ENCODE measurements at regions of chr14 and their contacts with region 1.

Region 1: DNA sequence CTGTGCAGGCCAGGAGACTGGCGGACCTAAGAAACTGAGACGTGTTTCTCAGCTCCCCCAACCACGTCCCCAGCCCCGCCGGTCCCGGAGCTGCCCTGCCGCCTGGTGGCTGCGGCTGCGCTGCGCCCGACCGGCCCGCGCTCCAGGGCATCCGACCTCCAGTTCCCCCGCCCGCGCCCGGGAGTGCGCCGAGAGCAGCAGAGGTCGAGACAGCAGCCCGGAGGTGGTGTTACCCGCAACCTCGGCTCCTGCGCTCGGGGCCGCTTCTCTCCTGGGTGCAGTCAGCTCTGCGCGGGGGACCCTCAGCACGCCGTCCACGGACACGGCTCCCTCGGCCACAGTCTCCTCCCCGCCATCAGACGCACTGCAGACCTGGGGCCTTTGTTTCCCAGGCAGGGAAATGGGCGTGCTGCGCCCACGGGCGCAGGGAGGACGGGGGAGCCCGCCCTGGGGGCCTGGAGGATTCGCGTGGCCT is 21.6 kb upstream of the GPR132 start:
- DNase-seq: peak; percentile 69
- H3K4me3 Mint-ChIP-seq: peak overlapping the region; percentile 77
- H3K27ac Mint-ChIP-seq: no peak overlapping the region
- H3K4me1 Mint-ChIP-seq: peaks cover 27% of the 10 kb centered on the region
- H3K27me3 Mint-ChIP-seq: peaks cover 26% of the 10 kb centered on the region
- CTCF ChIP-seq: peak; percentile 69

Region 2: DNA sequence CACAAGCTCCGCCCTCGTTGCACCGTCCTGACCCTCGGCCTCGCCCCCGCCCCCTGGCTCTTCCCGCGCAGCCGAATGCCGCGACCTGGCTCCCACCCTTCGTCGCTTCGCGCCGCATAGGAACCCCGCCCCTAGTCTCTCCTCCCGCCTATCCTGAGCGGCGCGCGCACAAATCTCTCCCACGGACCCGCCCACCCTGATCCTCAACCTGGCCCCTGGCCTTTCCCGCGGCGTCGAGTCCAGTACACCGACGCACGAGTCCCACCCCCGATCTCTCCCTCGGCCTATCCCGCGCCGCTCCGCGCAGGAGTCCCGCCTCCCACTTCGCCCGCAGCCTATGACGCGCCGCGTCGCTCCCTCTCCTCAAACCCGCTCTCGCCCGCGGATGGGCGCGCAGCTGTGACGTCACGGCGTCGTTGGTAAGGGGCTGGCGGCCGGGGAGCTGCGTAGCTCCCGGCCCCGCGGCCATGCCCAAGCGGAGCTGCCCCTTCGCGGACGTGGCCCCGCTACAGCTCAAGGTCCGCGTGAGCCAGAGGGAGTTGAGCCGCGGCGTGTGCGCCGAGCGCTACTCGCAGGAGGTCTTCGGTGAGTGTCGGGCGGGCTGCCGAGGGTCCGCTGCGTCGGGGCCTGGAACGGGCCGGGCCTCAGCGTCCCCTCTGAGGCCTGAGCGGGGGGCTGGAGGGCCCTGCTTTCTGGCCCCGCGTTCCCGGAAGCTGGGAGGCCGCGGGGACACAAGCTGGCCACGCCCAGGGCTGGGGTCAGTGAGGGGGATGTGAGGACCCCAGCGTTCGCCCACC is 333.9 kb before region 1 on chr14 and contains the start of gene SIVA1:
- CTCF ChIA-PET with region 1: no interaction called
- POLR2A ChIA-PET with region 1: no interaction called
- intact Hi-C with region 1: no loop called
- DNase-seq: peak; percentile 99
- H3K4me3 Mint-ChIP-seq: peak within 1 kb of the TSS; percentile 92
- H3K27ac Mint-ChIP-seq: peak within 1 kb of the TSS; percentile 92
- H3K4me1 Mint-ChIP-seq: peaks cover 28% of the 10 kb centered on the region
- H3K27me3 Mint-ChIP-seq: no peaks in the 10 kb centered on the region
- CTCF ChIP-seq: no peak
- total RNA-seq, gene SIVA1: 63.3 and 72.7 TPM in 2 replicates

Region 3: DNA sequence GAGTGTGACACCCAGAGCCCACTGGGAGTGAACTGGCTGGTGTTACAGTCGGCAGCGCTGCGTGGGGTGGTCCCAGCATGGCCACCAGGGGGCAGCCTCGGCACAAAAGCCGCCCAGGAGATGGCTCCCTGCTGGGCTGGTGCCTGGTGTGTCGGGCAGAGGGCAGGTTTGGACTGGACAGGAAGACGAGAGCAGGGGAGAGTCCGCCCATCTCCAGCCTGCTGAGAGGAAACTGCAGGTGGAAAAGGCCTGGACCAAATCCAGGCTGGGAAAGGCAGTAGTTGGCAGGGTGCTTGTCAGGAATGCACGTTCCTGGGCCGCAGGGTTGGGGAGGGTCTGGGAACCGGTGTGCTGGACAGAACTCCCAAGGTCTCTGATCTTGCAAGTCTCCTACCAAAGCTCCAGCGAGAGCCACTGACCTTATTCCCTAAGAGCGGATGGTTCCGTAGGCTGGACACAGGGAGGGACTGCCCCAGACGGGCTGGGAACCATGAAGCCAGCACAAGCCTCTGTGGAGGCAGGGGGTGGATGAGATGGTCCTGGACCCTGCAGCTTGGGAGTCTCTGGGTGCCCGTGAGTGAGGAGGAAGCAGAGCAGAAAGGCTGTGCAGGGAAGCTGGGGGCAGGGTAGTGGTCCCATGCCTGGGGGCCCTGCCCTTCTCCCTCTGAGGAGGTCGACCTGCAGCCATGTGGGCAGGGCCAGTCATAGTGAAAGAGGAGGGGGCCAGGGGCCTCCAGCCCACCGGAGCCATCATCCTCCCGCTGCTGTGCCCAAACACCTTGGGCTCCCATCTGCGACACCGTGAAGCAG is 110.5 kb before region 1 on chr14:
- CTCF ChIA-PET with region 1: interaction called, 8 read pairs
- POLR2A ChIA-PET with region 1: interaction called, 45 read pairs
- intact Hi-C with region 1: loop called (anchors 2 kb)
- DNase-seq: peak; percentile 93
- H3K4me3 Mint-ChIP-seq: peak overlapping the region; percentile 97
- H3K27ac Mint-ChIP-seq: no peak overlapping the region
- H3K4me1 Mint-ChIP-seq: peaks cover 41% of the 10 kb centered on the region
- H3K27me3 Mint-ChIP-seq: no peaks in the 10 kb centered on the region
- CTCF ChIP-seq: peak; percentile 98

Region 4: DNA sequence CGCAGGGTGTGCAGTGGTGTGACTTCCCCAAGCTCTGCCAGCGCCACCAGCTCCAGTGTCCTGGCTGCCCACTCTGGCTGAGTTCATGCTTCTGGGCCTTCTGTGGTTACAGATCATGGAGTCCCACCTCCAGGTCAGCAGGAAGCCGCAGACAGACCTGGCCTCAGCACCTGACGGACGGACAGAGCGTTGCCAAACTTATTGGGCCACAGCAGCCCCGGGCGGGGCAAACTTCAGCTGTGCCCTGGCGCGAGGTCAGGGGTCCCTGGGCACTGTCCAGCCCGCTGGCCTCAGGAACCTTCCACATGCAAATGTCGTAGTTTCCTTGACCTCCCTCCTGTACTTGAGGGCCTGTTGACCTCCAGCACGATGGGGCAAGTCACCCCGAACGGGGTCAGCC is 32.9 kb before region 1 on chr14:
- CTCF ChIA-PET with region 1: no interaction called
- POLR2A ChIA-PET with region 1: interaction called, 10 read pairs
- intact Hi-C with region 1: no loop called
- DNase-seq: no peak
- H3K4me3 Mint-ChIP-seq: no peak overlapping the region
- H3K27ac Mint-ChIP-seq: no peak overlapping the region
- H3K4me1 Mint-ChIP-seq: no peaks in the 10 kb centered on the region
- H3K27me3 Mint-ChIP-seq: peaks cover 19% of the 10 kb centered on the region
- CTCF ChIP-seq: no peak

Region 5: GRCh38 chr14:105097794-105098127 is 10.9 kb after region 1 on chr14:
- CTCF ChIA-PET with region 1: interaction called, 12 read pairs
- POLR2A ChIA-PET with region 1: interaction called, 18 read pairs
- intact Hi-C with region 1: no loop called
- DNase-seq: no peak
- H3K4me3 Mint-ChIP-seq: no peak overlapping the region
- H3K27ac Mint-ChIP-seq: no peak overlapping the region
- H3K4me1 Mint-ChIP-seq: peaks cover 12% of the 10 kb centered on the region
- H3K27me3 Mint-ChIP-seq: peaks cover 9% of the 10 kb centered on the region
- CTCF ChIP-seq: no peak

Region 6: GRCh38 chr14:105180592-105181548 is 94.0 kb after region 1 on chr14 and contains the start of gene NUDT14:
- CTCF ChIA-PET with region 1: interaction called, 5 read pairs
- POLR2A ChIA-PET with region 1: no interaction called
- intact Hi-C with region 1: loop called (anchors 5 kb)
- DNase-seq: peak; percentile 72
- H3K4me3 Mint-ChIP-seq: peak within 1 kb of the TSS; percentile 69
- H3K27ac Mint-ChIP-seq: no peak within 1 kb of the TSS
- H3K4me1 Mint-ChIP-seq: no peaks in the 10 kb centered on the region
- H3K27me3 Mint-ChIP-seq: peaks cover 22% of the 10 kb centered on the region
- CTCF ChIP-seq: no peak
- total RNA-seq, gene NUDT14: 26.1 and 27.4 TPM in 2 replicates

Region 7: DNA sequence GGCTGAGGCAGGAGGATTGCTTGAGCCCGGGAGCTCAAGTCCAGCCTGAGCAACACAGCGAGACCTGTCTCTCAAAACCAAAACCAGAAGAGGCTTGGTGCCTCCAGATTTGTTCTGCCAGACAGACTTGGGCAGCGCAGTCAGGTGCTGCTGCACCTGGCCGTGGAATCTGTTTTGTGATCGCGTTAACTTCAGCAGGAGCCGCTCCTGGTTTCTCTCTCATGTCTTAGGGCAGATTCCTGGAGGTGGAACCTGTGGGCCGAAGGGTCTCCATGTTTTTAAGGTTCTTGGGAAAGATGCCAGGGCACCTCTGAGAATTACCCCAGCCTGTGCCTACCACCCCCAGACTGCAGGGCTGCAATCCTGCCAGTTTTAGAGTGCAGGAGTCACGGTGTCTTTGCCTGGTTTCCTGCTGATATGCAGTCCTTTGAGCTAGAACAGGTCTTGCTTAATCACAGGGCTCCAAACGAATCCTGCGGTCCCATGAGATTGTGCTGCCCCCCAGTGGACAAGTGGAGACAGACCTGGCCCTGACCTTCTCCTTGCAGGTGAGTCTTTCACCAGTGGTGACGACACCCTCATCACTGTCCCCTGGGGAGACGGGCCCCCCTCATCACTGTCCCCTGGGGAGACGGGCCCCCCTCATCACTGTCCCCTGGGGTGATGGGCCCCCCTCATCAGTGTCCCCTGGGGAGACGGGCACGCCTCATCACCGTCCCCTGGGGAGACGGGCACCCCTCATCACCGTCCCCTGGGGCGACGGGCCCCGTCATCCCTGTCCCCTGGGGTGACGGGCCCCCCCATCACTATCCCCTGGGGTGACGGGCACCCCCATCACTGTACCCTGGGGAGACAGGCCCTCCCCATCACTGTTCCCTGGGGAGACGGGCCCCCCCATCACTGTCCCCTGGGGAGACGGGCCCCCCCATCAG is 265.3 kb after region 1 on chr14:
- CTCF ChIA-PET with region 1: interaction called, 3 read pairs
- POLR2A ChIA-PET with region 1: interaction called, 3 read pairs
- intact Hi-C with region 1: loop called (anchors 1 kb)
- DNase-seq: peak; percentile 94
- H3K4me3 Mint-ChIP-seq: no peak overlapping the region
- H3K27ac Mint-ChIP-seq: no peak overlapping the region
- H3K4me1 Mint-ChIP-seq: no peaks in the 10 kb centered on the region
- H3K27me3 Mint-ChIP-seq: no peaks in the 10 kb centered on the region
- CTCF ChIP-seq: peak; percentile 88